Left cardiac atrium (tissue), 4 donors: ENCODE measurements at regions of chr17 and their contacts with region 1.

Region 1: GRCh38 chr17:15335446-15335845 is 6.0 kb downstream of the TEKT3 start:
- DNase-seq: no peak
- ATAC-seq: no peak

Region 2: GRCh38 chr17:15197229-15197628 is 138.2 kb before region 1 on chr17:
- intact Hi-C with region 1: no loop called
- DNase-seq: no peak
- ATAC-seq: no peak

Region 3: DNA sequence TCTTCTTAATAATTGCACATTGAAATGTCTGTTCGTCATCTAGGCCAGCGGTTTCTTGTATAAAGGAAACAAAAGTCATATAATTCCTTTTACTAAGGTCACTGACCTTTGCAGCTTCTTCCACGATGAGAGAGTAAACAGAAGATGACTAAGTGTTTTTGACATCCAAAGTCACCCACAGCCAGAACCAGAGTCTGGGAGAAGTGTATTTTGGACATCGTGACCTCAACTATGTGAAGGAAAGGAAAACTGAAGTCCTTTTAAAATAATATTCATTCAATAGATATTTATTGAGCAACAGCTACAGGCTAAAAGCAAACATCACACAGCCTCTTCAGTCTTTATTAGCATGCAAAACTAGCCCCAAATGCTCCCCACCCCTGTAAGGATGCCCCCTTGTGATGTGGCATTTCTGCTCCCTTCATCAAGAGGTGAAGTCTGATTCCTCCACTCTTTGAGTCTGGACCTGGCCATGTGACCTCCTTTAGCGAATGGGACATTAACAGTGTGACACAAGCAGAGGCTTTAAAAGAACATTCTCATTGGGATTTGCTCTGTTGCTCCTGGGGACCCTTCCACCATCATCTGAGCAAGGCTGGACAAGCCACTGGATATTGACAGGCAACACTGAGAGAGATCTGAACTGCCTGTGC is 62.2 kb before region 1 on chr17:
- intact Hi-C with region 1: loop called in 1 of 2 experiments (anchors 5 kb)
- DNase-seq: no peak
- ATAC-seq: peak in 1 of 2 donors; percentile 34